ENCODE measurements at regions of chr20 and their contacts with region 1.

Region 1: GRCh38 chr20:47309909-47310308 is 46.6 kb downstream of the ZMYND8 start:
- DNase-seq: no peak
- H3K4me3 ChIP-seq: no peak overlapping the region
- H3K27ac ChIP-seq: peak overlapping the region; percentile 3 to 64 (median 41)
- H3K4me1 ChIP-seq: peaks cover 3 to 20% (median 6%) of the 10 kb centered on the region in 4 donors
- H3K27me3 ChIP-seq: no peaks in the 10 kb centered on the region
- CTCF ChIP-seq: no peak
- EP300 ChIP-seq: no peak
- POLR2A ChIP-seq: no peak

Region 2: GRCh38 chr20:47631078-47631477 is 321.2 kb after region 1 on chr20:
- in situ Hi-C with region 1: no loop called
- intact Hi-C with region 1: no loop called
- DNase-seq: no peak
- H3K4me3 ChIP-seq: no peak overlapping the region
- H3K27ac ChIP-seq: no peak overlapping the region
- H3K4me1 ChIP-seq: no peaks in the 10 kb centered on the region
- H3K27me3 ChIP-seq: no peaks in the 10 kb centered on the region
- CTCF ChIP-seq: no peak
- EP300 ChIP-seq: no peak
- POLR2A ChIP-seq: no peak

Region 3: DNA sequence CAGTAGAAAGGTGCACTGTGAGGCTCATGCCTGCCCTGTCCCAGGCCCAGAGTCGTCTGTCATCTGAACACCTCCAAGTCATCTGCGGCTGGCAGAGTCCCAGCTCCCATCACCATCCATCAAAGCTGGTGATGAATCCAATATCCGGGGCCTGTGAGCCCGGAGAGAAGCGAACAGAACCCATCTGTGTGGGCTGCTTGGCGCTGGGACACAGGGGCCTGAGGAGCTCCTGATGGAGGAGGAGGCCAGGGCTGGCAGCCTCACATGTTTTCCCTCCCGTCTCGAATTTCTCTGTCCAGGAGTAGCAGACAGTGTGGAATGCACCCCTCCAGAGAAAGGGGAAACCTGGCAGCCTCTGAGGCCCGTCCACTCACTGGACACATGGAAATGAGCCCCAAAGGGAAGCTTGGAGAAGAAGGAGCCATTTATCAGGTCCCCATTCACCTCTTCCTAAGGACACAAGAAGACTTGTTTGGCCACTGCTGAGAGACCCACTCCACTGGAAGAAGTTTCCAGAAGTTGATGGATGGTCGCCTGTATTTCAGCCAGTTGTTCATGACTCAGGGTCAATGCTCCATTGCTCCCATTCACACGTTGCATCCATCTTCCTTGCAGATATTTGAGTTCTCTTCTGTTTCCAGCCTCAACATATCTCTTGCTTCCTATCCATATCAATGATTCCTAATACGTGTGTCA is 782.8 kb after region 1 on chr20:
- in situ Hi-C with region 1: no loop called
- intact Hi-C with region 1: loop called (anchors 5 kb)
- DNase-seq: no peak
- H3K4me3 ChIP-seq: no peak overlapping the region
- H3K27ac ChIP-seq: no peak overlapping the region
- H3K4me1 ChIP-seq: no peaks in the 10 kb centered on the region
- H3K27me3 ChIP-seq: peaks cover 12% of the 10 kb centered on the region
- CTCF ChIP-seq: no peak
- EP300 ChIP-seq: no peak
- POLR2A ChIP-seq: no peak